ENCODE measurements at regions of chr17 and their contacts with region 1.

Region 1: GRCh38 chr17:47717261-47717697 is 15.8 kb upstream of the TBX21 start:
- DNase-seq: peak in 1 of 3 donors; percentile 41
- H3K4me3 ChIP-seq: no peak overlapping the region
- H3K27ac ChIP-seq: no peak overlapping the region
- H3K4me1 ChIP-seq: peaks cover 10 to 71% (median 62%) of the 10 kb centered on the region in 4 experiments
- H3K27me3 ChIP-seq: peaks cover 0 to 13% (median 0%) of the 10 kb centered on the region in 5 experiments

Region 2: GRCh38 chr17:47687748-47688147 is 29.5 kb before region 1 on chr17:
- CTCF ChIA-PET with region 1: no interaction called
- POLR2A ChIA-PET with region 1: no interaction called
- DNase-seq: no peak
- H3K4me3 ChIP-seq: no peak overlapping the region
- H3K27ac ChIP-seq: no peak overlapping the region
- H3K4me1 ChIP-seq: peaks cover 2 to 16% (median 7%) of the 10 kb centered on the region in 4 experiments
- H3K27me3 ChIP-seq: no peaks in the 10 kb centered on the region

Region 3: DNA sequence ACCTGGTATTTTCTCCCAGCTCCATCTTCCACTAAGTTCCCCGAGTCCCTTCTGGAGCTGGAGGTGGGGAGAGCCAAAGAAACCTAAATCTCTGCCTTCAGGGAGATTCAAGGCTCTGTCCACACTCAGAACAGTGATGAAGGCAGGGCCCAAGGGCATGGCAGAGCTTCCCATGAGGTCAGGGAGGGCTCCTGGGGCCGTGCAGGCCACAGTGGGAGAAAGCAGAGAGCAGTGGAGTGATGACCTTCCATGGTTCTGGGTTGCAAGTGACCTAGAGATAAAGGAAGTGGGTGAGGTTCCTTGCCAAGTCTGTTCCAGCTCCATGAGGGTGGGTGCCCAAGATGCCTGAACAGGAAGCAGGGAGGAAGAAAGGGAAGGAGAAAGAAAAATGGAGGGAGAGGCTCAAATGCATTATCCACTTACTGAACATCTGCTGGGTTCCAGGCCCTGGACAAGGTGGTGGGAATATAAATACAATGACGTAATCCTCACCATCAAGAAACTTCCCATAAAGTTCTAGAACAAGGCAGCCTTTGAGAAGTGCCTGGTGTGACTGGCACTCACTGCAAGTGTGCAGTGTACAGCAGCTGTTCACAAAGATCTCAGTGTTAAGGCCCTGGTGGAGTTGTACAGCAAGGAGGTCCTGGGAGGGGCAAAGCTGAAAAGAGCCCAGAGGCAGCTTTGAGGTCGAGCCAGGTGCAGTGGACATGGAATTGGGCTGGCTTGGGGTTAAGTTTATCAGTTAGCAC is 10.0 kb before region 1 on chr17:
- CTCF ChIA-PET with region 1: interaction called, 118 read pairs
- POLR2A ChIA-PET with region 1: interaction called, 4 read pairs
- DNase-seq: no peak
- H3K4me3 ChIP-seq: no peak overlapping the region
- H3K27ac ChIP-seq: no peak overlapping the region
- H3K4me1 ChIP-seq: peaks cover 5 to 61% (median 56%) of the 10 kb centered on the region in 4 experiments
- H3K27me3 ChIP-seq: no peaks in the 10 kb centered on the region

Region 4: GRCh38 chr17:47733047-47733673 is 15.9 kb after region 1 on chr17 and contains the start of gene TBX21:
- CTCF ChIA-PET with region 1: interaction called, 26 read pairs
- POLR2A ChIA-PET with region 1: interaction called, 3 read pairs
- DNase-seq: peak; percentile 92 to 94 (median 94)
- H3K4me3 ChIP-seq: peak within 1 kb of the TSS; percentile 17 to 70 (median 51)
- H3K27ac ChIP-seq: no peak within 1 kb of the TSS
- H3K4me1 ChIP-seq: peaks cover 0 to 27% (median 25%) of the 10 kb centered on the region in 4 experiments
- H3K27me3 ChIP-seq: peaks cover 0 to 24% (median 12%) of the 10 kb centered on the region in 5 experiments

Region 5: GRCh38 chr17:47751471-47751870 is 34.2 kb after region 1 on chr17:
- CTCF ChIA-PET with region 1: no interaction called
- POLR2A ChIA-PET with region 1: no interaction called
- DNase-seq: no peak
- H3K4me3 ChIP-seq: no peak overlapping the region
- H3K27ac ChIP-seq: no peak overlapping the region
- H3K4me1 ChIP-seq: no peaks in the 10 kb centered on the region
- H3K27me3 ChIP-seq: peaks cover 0 to 2% (median 0%) of the 10 kb centered on the region in 5 experiments